ENCODE measurements at regions of chr18 and their contacts with region 1.

Region 1: DNA sequence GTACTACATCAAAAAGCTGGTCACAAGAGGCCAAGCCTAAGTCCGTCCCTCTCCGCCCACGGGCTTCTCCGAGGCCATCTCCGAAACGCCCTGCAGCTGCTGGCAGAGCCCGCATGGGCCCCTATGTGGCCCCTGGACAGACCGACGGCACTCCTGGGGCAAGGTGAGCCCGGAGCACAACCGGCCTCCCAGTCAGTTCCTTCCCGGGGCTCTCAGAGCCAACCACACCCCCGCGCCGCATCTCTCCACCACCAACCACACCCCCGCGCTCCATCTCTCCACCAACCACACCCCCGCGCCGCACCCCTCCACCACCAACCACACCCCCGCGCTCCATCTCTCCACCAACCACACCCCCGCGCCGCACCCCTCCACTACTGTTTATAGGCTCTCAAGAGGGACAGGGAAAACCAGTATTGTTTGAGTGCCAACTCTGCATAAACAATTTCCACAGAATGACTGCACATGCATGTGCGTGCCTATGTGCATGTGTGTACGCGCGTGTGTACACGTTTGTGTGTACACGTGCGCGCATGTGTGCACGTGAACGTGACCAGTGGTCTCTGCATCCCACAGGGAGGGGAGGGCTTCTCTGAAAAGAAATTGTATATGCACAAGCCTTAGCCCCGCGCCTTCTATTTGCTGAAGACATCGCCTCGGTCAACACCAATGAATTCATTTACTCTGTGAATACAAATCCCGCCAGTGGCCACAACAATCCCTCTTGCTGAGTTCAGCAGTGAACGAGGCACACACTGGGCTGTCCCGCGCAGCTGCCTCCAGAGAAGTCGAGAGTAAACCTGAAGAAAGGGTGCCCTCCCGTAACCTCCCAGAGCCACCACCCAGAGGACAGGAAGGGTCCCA is 93.3 kb downstream of the ZNF516 start:
- DNase-seq: no peak
- H3K4me3 ChIP-seq: no peak overlapping the region
- H3K4me1 ChIP-seq: peaks cover 4% of the 10 kb centered on the region; the same call in 1 of the 2 replicates
- H3K27me3 ChIP-seq: no peaks in the 10 kb centered on the region

Region 2: GRCh38 chr18:76709659-76710645 is 308.2 kb after region 1 on chr18:
- in situ Hi-C with region 1: loop called (anchors 5 kb)
- DNase-seq: peak; percentile 66 to 80
- H3K4me3 ChIP-seq: no peak overlapping the region
- H3K4me1 ChIP-seq: no peaks in the 10 kb centered on the region
- H3K27me3 ChIP-seq: no peaks in the 10 kb centered on the region

Region 3: DNA sequence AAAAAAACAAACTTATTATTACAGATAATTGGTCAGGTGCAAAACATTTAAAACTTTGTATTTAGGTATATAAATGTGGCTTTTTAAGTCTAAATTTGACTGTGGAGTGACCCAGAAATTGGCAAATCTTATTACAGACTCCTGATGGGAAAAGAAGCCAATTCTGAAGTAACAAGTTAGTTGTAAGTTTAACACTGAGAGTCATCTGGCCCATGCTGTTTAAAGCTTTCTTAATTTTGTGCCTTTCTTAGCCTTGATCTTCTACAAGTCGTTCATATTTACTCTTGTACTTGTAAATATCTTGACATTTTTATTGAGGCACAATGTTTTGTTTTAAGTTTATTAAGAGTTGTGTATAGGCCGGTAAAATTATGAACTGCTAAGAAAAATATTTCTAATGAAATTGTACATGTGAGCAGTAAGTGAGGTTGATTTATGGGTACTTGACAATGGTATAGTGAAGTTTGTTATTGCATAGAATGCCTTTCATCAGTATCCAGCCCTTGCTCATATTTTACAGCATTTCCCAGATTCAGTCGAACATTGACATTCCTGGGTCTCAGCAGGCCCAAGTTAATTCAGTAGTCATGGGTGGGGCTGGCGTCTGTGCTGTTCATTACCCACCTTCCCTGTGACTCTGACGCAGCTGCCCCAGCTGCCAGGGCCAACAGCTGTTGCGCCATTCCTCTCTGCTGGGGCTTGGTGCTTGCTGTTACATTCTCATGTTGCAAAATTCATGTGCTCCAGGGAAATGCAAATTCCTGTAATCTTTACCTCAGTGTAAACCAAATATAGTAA is 542.0 kb after region 1 on chr18:
- in situ Hi-C with region 1: no loop called
- DNase-seq: no peak
- H3K4me3 ChIP-seq: no peak overlapping the region
- H3K4me1 ChIP-seq: no peaks in the 10 kb centered on the region
- H3K27me3 ChIP-seq: no peaks in the 10 kb centered on the region

Measured in HAP-1 (cell line).